SK-N-SH (cell line): ENCODE measurements at regions of chr9 and their contacts with region 1.

Region 1: GRCh38 chr9:18208154-18209059 is 265.5 kb upstream of the ADAMTSL1 start:
- DNase-seq: peak; percentile 6
- H3K4me3 ChIP-seq: no peak overlapping the region; a peak in 1 of 4 replicates
- H3K27ac ChIP-seq: no peak overlapping the region
- H3K4me1 ChIP-seq: no peaks in the 10 kb centered on the region
- H3K27me3 ChIP-seq: peaks cover 8% of the 10 kb centered on the region; the same call in 1 of the 2 replicates
- CTCF ChIP-seq: peak; percentile 69
- EP300 ChIP-seq: no peak
- RAD21 ChIP-seq: peak; percentile 43

Region 2: DNA sequence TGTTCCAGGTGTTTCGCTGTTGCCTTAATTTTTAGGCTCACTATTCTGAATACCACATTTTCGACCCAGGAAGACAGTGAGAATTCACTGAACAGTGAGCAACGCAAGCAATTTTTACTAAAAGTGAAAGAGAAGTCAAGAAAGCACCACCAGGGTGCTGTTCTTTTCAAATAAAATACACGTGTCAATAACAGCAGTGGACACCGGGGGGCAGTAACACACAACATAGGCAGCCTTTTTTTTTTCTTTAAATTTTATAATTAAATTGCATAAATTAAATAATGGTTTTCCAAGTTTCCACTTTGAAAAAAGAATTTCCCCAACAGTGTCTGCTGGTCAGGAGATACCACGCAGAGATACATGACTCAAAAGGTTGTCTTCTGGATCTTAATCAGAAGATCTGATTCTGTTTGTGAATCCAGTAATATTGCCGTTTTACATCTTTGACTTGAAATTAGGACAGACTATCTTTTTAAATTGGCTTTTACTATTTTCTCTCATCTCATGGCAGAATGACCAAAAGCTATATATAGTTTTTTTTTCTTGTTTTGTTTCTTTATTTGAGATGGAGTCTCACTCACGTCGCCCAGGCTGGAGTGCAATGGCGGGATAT is 676.7 kb before region 1 on chr9:
- CTCF ChIA-PET with region 1: interaction called, 11 read pairs
- POLR2A ChIA-PET with region 1: no interaction called
- DNase-seq: peak; percentile 59
- H3K4me3 ChIP-seq: peak overlapping the region in 1 of 2 experiments; percentile 36; a peak in 1 of 4 replicates
- H3K27ac ChIP-seq: no peak overlapping the region
- H3K4me1 ChIP-seq: no peaks in the 10 kb centered on the region
- H3K27me3 ChIP-seq: no peaks in the 10 kb centered on the region; the same call in 1 of the 2 replicates
- CTCF ChIP-seq: peak; percentile 74
- EP300 ChIP-seq: no peak
- RAD21 ChIP-seq: peak; percentile 74

Region 3: DNA sequence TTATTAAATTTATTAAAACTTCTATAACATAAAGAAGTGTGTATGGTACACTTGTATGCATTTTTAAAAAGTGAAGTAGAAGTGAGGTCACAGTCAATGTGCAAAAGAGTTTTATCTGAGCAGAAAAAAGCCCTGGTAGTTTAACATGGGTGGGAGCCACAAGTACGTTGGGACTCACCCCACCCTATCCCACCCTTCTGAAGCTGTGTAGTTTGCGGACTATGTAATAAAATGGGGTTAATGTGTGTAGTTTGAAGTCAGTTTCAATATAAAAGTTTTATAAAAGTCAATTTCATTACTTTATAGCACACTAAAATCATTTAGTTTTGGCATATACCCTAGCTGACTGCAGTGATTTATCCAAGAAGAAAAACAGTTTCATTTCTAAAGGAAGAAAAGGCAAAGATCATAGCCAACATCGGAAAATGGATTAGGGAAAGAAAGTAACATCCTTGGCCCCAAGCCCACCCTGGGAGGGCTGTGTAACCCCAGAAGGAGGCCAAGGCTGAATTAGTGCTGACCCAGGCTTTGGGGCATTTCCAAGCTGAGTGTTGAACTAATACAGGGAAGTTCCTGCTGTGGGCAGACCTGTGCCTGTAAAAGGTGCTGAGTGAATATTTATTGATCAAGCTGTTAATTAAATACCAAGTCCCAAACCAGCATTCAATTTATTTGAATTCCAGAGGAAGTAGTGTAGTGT is 133.0 kb before region 1 on chr9:
- CTCF ChIA-PET with region 1: no interaction called
- POLR2A ChIA-PET with region 1: no interaction called
- DNase-seq: no peak
- H3K4me3 ChIP-seq: no peak overlapping the region
- H3K27ac ChIP-seq: no peak overlapping the region
- H3K4me1 ChIP-seq: no peaks in the 10 kb centered on the region
- H3K27me3 ChIP-seq: peaks cover 9% of the 10 kb centered on the region; the same call in 1 of the 2 replicates
- CTCF ChIP-seq: no peak
- EP300 ChIP-seq: no peak
- RAD21 ChIP-seq: no peak

Region 4: GRCh38 chr9:18122171-18122570 is 86.2 kb before region 1 on chr9:
- CTCF ChIA-PET with region 1: no interaction called
- POLR2A ChIA-PET with region 1: no interaction called
- DNase-seq: no peak
- H3K4me3 ChIP-seq: no peak overlapping the region
- H3K27ac ChIP-seq: no peak overlapping the region
- H3K4me1 ChIP-seq: no peaks in the 10 kb centered on the region
- H3K27me3 ChIP-seq: peaks cover 6% of the 10 kb centered on the region; the same call in 1 of the 2 replicates
- CTCF ChIP-seq: no peak
- EP300 ChIP-seq: no peak
- RAD21 ChIP-seq: no peak

Region 5: DNA sequence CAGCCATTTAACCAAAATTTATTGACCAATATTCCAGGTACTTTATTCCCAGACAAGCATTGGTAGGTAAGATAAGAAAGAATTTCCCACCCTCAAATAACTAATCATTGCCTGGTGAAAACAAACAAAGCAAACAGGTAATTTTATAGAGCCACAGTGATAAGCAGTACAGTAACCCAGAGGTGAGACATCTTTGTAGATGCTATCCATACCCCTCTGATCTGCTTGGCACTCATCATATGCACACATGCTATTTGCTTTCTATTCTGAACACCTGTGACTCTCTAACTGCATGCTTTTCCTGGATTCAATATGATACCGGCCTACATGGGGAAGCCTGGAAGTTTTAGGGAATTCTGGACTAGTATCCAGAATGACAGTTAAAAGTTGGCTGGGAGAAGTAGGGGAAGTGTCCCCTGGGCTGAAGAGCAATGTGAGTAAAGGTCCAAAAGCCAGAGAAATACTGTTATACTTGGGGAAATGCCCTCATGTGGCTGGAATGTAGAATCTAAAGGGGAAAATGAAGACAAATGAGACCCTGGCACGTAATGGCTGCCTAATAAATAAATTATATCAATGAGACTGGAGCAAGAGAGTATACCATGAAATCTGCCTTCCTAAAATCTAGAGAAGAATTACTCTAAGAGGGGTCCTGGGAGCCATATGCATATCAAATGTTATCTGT is 21.7 kb after region 1 on chr9:
- CTCF ChIA-PET with region 1: interaction called, 13 read pairs
- POLR2A ChIA-PET with region 1: no interaction called
- DNase-seq: no peak
- H3K4me3 ChIP-seq: no peak overlapping the region
- H3K27ac ChIP-seq: no peak overlapping the region
- H3K4me1 ChIP-seq: no peaks in the 10 kb centered on the region
- H3K27me3 ChIP-seq: no peaks in the 10 kb centered on the region
- CTCF ChIP-seq: peak; percentile 17; the same call in 1 of the 2 replicates
- EP300 ChIP-seq: no peak
- RAD21 ChIP-seq: no peak

Region 6: DNA sequence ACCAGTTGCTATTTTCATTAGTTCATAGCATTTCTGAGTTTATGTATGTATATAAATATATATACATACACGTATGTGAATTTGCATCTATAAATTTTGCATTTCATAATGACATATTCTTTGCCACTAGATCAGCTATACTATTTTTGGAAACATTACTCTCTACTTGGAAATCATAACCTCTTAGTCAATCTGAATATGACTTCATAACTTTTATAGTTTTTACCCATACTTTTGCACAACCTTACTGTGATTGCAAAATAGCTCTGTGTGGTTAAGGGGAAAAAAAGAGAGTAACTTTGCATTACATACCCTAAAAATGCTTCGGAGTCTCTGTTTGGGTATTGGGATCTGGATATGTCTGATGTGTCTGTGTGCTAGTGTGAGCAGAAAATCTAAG is 220.7 kb after region 1 on chr9:
- CTCF ChIA-PET with region 1: no interaction called
- POLR2A ChIA-PET with region 1: no interaction called
- DNase-seq: no peak
- H3K4me3 ChIP-seq: no peak overlapping the region
- H3K27ac ChIP-seq: no peak overlapping the region
- H3K4me1 ChIP-seq: 0 out of 4 replicates have a peak, but pooled peaks cover 0 to 5% of the 10 kb centered on the region in 2 experiments
- H3K27me3 ChIP-seq: no peaks in the 10 kb centered on the region
- CTCF ChIP-seq: no peak
- EP300 ChIP-seq: no peak
- RAD21 ChIP-seq: no peak